PC-9 (cell line): ENCODE measurements at regions of chr7 and their contacts with region 1.

Region 1: DNA sequence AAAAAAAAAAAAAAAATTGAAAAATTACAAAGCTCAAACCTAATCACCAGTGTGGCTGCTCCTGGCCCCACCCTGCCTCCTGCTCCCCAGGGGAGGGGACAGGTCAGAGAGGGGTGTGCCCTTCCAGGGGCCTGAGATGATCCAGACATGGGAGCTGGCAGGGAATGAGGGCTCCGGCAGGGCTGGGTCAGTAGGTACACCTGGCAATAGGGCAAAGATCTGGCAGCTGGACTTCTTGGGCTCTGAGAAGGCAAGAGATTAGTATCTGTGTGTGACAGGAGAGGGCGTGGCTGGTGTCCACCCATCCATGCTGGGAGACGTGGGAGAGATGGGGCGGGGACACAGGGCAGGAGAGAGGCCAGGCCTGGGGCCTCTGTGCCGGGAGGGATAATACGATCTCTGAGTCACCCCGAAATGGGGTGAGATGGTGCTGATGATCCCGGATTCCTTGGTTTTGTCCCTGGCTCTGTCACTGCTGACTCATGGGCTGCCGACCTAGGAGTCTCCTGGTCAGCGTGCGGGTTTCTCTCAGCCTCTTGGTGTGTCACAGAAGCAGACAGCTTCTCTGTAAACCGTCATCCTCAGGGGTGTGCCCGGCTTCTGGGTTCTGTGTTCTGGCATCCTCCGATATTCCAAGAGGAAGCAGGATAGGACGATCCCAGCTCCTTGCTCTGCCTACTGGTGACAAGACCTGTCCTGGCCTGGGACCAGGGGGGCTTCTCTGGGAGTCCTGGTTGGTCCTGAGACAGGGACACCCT is 8.3 kb upstream of the CLDN4 start:
- DNase-seq: peak; percentile 99
- H3K4me3 ChIP-seq: no peak overlapping the region
- H3K27ac ChIP-seq: peak overlapping the region; percentile 99
- H3K4me1 ChIP-seq: peaks cover 62% of the 10 kb centered on the region
- H3K27me3 ChIP-seq: no peaks in the 10 kb centered on the region
- CTCF ChIP-seq: no peak

Region 2: GRCh38 chr7:73769992-73770859 is 52.3 kb before region 1 on chr7 and contains the start of gene CLDN3:
- CTCF ChIA-PET with region 1: interaction called, 5 read pairs
- POLR2A ChIA-PET with region 1: interaction called, 7 read pairs
- intact Hi-C with region 1: loop called (anchors 1 kb)
- DNase-seq: peak; percentile 83 to 97
- H3K4me3 ChIP-seq: peak within 1 kb of the TSS; percentile 66; the same call in 1 of the 2 replicates
- H3K27ac ChIP-seq: peak within 1 kb of the TSS; percentile 58
- H3K4me1 ChIP-seq: peaks cover 23% of the 10 kb centered on the region
- H3K27me3 ChIP-seq: no peaks in the 10 kb centered on the region
- CTCF ChIP-seq: no peak
- total RNA-seq, gene CLDN3: 31.3 and 45.2 TPM in 2 replicates

Region 3: DNA sequence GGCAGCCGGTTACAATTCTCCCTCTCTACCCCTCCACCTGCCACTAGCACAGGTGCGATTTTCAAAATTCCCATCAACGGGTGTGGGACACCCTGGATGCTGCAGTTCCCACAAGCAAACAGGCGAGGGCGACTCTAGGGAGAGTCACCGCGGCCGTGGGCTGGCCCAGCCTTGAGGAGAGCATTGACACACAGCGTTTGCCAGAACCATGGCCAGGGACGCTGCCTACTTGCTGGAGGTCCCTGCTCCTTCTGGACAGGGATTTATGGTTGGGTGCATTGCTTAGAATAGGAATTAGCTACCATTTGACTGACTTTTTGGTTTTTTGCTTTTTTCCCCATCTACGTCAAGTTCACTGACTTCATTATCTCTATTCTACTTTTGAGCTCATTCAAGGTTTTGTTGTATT is 10.7 kb before region 1 on chr7:
- CTCF ChIA-PET with region 1: interaction called, 7 read pairs
- POLR2A ChIA-PET with region 1: interaction called, 36 read pairs
- intact Hi-C with region 1: loop called (anchors 1 kb)
- DNase-seq: peak; percentile 55 to 75
- H3K4me3 ChIP-seq: no peak overlapping the region
- H3K27ac ChIP-seq: no peak overlapping the region
- H3K4me1 ChIP-seq: peaks cover 22% of the 10 kb centered on the region
- H3K27me3 ChIP-seq: no peaks in the 10 kb centered on the region
- CTCF ChIP-seq: peak; percentile 89

Region 4: GRCh38 chr7:73842247-73842895 is 19.9 kb after region 1 on chr7 and contains the start of gene METTL27:
- CTCF ChIA-PET with region 1: interaction called, 3 read pairs
- POLR2A ChIA-PET with region 1: interaction called, 22 read pairs
- intact Hi-C with region 1: no loop called
- DNase-seq: peak; percentile 79 to 97
- H3K4me3 ChIP-seq: peak within 1 kb of the TSS; percentile 84
- H3K27ac ChIP-seq: peak within 1 kb of the TSS; percentile 59
- H3K4me1 ChIP-seq: peaks cover 20% of the 10 kb centered on the region
- H3K27me3 ChIP-seq: no peaks in the 10 kb centered on the region
- CTCF ChIP-seq: no peak
- total RNA-seq, gene METTL27: 23.2 and 34.7 TPM in 2 replicates

Region 5: DNA sequence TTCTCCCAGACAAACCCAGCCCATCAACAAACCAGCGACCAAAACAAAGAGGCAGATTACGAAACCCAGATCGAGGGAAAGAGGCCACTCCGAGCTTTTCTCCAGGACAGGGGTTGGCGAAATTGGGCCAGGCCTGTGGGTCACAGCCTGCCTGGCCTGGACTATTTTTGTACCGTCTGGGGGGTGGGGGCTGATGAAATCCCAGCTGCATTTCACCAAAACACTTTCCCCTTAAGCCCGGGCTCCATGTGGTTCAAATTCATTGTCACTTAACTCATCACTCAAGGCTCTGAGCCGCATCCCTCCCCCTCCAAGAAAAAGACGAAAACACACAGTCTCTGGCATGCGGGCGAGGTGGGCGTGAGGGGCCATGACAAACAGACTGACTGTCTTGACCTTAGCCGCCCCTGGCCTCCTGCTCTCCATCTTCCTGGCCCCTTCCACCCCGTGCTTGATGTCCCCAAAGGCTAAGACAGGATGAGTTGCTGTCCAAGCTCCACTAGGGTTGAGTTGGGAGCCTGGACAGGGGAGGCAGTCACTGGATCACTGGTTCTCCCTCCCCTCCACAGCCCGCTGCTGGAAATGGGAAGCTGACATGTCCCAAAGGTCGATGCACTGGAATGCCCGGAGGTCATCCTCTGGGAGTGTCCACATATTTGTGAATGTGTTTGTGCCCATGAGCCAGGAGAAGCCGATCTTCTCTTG is 57.6 kb after region 1 on chr7:
- CTCF ChIA-PET with region 1: no interaction called
- POLR2A ChIA-PET with region 1: no interaction called
- intact Hi-C with region 1: no loop called
- DNase-seq: peak; percentile 39 to 42
- H3K4me3 ChIP-seq: no peak overlapping the region
- H3K27ac ChIP-seq: no peak overlapping the region
- H3K4me1 ChIP-seq: peaks cover 27% of the 10 kb centered on the region
- H3K27me3 ChIP-seq: no peaks in the 10 kb centered on the region
- CTCF ChIP-seq: no peak

Region 6: DNA sequence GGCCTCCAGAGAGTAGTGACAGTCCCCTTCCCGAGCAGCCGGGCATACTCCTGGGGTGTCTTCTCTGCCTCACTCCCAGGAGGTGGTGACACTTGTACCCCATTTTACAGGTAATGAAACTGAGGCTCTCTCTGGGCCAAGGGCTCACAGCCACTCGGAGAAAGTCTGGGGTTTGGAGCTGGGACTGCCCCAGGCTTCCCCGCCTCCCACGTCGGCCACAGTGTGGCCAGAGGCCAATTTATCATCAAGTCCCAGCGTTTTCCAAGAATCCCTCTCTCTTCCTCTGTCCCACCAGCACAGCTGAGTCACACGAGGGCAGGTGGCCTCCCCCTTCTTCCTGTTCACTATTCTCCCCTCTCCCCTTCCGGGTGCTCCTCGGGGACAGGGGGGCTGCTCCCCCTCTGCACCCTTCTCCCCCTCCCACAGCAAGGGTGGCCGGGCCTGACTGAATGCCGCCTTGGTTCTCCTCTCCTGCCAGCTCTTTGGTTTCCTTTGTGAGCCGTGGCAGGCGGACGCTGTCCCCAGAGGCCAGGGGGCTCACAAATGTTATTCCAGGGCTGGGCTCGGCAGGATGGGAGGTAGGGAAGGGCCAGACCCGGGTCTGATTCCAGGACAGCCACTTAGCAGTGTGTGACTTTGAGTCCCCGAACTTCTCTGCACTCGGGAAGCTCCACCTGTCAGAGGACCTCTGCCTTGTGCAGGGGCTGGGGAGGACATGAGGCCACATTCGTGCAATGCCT is 484.4 kb after region 1 on chr7:
- CTCF ChIA-PET with region 1: no interaction called
- POLR2A ChIA-PET with region 1: no interaction called
- intact Hi-C with region 1: no loop called
- DNase-seq: no peak
- H3K4me3 ChIP-seq: no peak overlapping the region
- H3K27ac ChIP-seq: no peak overlapping the region
- H3K4me1 ChIP-seq: peaks cover 23% of the 10 kb centered on the region
- H3K27me3 ChIP-seq: no peaks in the 10 kb centered on the region
- CTCF ChIP-seq: no peak